Panc1 (cell line): ENCODE measurements at regions of chr3 and their contacts with region 1.

Region 1: GRCh38 chr3:122925756-122926155 is 101.8 kb downstream of the SEMA5B start:
- DNase-seq: no peak
- ATAC-seq: no peak
- H3K4me3 ChIP-seq: no peak overlapping the region
- H3K27ac ChIP-seq: no peak overlapping the region
- H3K4me1 ChIP-seq: peaks cover 2% of the 10 kb centered on the region; the same call in 1 of the 2 replicates
- H3K27me3 ChIP-seq: peaks cover 32% of the 10 kb centered on the region
- CTCF ChIP-seq: no peak

Region 2: GRCh38 chr3:122484985-122485384 is 440.8 kb before region 1 on chr3:
- CTCF ChIA-PET with region 1: no interaction called
- POLR2A ChIA-PET with region 1: interaction called, 10 read pairs
- in situ Hi-C with region 1: no loop called
- intact Hi-C with region 1: no loop called
- DNase-seq: no peak
- ATAC-seq: no peak
- H3K4me3 ChIP-seq: no peak overlapping the region
- H3K27ac ChIP-seq: no peak overlapping the region
- H3K4me1 ChIP-seq: peaks cover 15% of the 10 kb centered on the region; the same call in 1 of the 2 replicates
- H3K27me3 ChIP-seq: no peaks in the 10 kb centered on the region
- CTCF ChIP-seq: no peak

Region 3: GRCh38 chr3:123096731-123097130 is 171.0 kb after region 1 on chr3:
- CTCF ChIA-PET with region 1: no interaction called
- POLR2A ChIA-PET with region 1: no interaction called
- in situ Hi-C with region 1: no loop called
- intact Hi-C with region 1: no loop called
- DNase-seq: no peak
- ATAC-seq: no peak
- H3K4me3 ChIP-seq: no peak overlapping the region
- H3K27ac ChIP-seq: no peak overlapping the region
- H3K4me1 ChIP-seq: peaks cover 6% of the 10 kb centered on the region; the same call in 1 of the 2 replicates
- H3K27me3 ChIP-seq: no peaks in the 10 kb centered on the region
- CTCF ChIP-seq: no peak